K562 (cell line): ENCODE measurements at regions of chr2 and their contacts with region 1.

Region 1: GRCh38 chr2:161662373-161662772 is 38.2 kb downstream of the SLC4A10 start:
- DNase-seq: no peak
- ATAC-seq: no peak
- H3K4me3 ChIP-seq: no peak overlapping the region
- H3K27ac ChIP-seq: no peak overlapping the region
- H3K4me1 ChIP-seq: no peaks in the 10 kb centered on the region
- H3K27me3 ChIP-seq: no peaks in the 10 kb centered on the region
- CTCF ChIP-seq: no peak
- EP300 ChIP-seq: no peak
- POLR2A ChIP-seq: no peak
- RAD21 ChIP-seq: no peak

Region 2: GRCh38 chr2:161695225-161695624 is 32.9 kb after region 1 on chr2:
- CTCF ChIA-PET with region 1: no interaction called
- POLR2A ChIA-PET with region 1: no interaction called
- in situ Hi-C with region 1: no loop called
- intact Hi-C with region 1: loop called (anchors 1 kb)
- DNase-seq: no peak
- ATAC-seq: no peak
- H3K4me3 ChIP-seq: no peak overlapping the region
- H3K27ac ChIP-seq: no peak overlapping the region
- H3K4me1 ChIP-seq: no peaks in the 10 kb centered on the region
- H3K27me3 ChIP-seq: no peaks in the 10 kb centered on the region
- CTCF ChIP-seq: no peak
- EP300 ChIP-seq: no peak
- POLR2A ChIP-seq: no peak
- RAD21 ChIP-seq: no peak